H1 (cell line): ENCODE measurements at regions of chr6 and their contacts with region 1.

Region 1: GRCh38 chr6:27332692-27333641 is 20.9 kb upstream of the POM121L2 start:
- DNase-seq: peak; percentile 13 to 76
- H3K4me3 ChIP-seq: peak overlapping the region; percentile 84 to 98 (median 92)
- H3K27ac ChIP-seq: no peak overlapping the region; the same call in 1 of the 2 replicates
- H3K4me1 ChIP-seq: no peaks in the 10 kb centered on the region
- H3K27me3 ChIP-seq: no peaks in the 10 kb centered on the region
- CTCF ChIP-seq: no peak; a peak in 1 of 4 replicates
- EP300 ChIP-seq: no peak
- POLR2A ChIP-seq: no peak
- RAD21 ChIP-seq: no peak

Region 2: DNA sequence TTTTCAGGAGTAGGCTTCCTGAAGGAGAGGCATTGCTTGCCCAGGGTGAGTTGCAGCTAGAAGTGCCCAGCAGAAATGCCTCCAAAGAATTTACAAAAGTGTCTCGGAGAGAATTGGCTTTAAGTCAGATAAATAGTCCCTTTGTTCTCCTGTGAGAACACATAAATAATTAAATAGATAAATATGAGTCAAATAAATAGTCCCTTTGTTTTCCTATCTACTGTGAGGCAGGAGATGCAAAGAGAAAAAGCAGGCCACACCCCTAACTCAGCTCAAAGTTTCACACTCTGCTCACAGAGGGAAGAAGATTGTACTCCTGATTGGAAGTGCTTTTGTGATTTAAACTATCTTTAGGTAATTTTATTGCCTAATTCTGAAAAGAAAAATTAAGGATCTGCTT is 266.2 kb before region 1 on chr6:
- CTCF ChIA-PET with region 1: no interaction called
- POLR2A ChIA-PET with region 1: no interaction called
- DNase-seq: no peak
- H3K4me3 ChIP-seq: peak overlapping the region in 2 of 4 experiments; percentile 2 to 7; a peak in 2 of 8 replicates
- H3K27ac ChIP-seq: no peak overlapping the region
- H3K4me1 ChIP-seq: peaks cover 4 to 5% (median 4%) of the 10 kb centered on the region in 4 experiments; a peak in 6 of 7 replicates
- H3K27me3 ChIP-seq: no peaks in the 10 kb centered on the region
- CTCF ChIP-seq: no peak
- EP300 ChIP-seq: no peak
- POLR2A ChIP-seq: no peak
- RAD21 ChIP-seq: no peak

Region 3: DNA sequence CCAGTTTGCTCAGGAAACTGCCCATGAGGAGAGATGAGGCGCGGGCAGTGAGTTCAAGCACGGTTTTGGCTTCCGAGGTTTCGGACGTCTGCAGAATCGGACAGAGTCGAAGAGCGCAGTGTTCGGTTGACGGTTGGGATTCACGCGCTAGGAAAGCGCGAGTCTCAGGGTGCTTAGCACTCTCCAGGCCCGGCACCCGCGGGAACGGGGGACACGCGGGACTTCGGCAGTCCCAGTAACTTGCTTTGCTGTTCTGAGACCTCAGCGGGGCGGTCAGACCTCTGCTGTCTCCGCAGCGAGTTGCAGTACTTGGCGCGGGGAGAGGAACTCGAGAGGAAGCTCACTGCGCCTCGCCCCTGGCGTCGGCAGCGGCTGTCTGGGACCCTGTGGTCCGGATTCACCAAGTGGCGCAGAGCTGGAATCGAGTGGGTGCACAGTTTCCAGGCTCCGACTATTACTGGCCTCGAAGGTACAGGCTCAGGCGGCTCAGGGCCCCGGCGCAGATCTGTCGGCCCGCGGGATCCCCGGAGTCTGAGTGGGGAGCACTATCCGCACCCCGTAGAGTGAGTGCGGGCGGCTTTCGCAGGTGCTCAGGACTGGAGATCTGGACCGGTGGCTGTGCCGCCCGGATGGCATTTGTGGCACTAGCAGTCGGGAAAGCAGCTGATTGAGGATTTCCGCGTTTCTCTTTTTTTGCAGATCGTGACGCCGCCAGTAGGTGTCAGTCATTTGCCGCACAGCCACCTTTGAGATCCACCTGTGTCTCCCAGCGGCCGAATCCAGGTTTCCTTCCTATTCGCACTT is 20.6 kb before region 1 on chr6 and contains the start of gene POM121L2:
- CTCF ChIA-PET with region 1: interaction called, 13 read pairs
- POLR2A ChIA-PET with region 1: interaction called, 4 read pairs
- DNase-seq: peak in 1 of 2 experiments; percentile 90
- H3K4me3 ChIP-seq: peak within 1 kb of the TSS; percentile 61 to 80 (median 72)
- H3K27ac ChIP-seq: no peak within 1 kb of the TSS
- H3K4me1 ChIP-seq: peaks cover 0 to 6% (median 2%) of the 10 kb centered on the region in 4 experiments; a peak in 3 of 7 replicates
- H3K27me3 ChIP-seq: peaks cover 13 to 36% (median 31%) of the 10 kb centered on the region in 4 experiments
- CTCF ChIP-seq: peak; percentile 78 to 91 (median 89)
- EP300 ChIP-seq: no peak
- POLR2A ChIP-seq: no peak
- RAD21 ChIP-seq: peak; percentile 91 to 94
- total RNA-seq, gene POM121L2: 0.09 and 0.17 TPM in 2 replicates

Region 4: DNA sequence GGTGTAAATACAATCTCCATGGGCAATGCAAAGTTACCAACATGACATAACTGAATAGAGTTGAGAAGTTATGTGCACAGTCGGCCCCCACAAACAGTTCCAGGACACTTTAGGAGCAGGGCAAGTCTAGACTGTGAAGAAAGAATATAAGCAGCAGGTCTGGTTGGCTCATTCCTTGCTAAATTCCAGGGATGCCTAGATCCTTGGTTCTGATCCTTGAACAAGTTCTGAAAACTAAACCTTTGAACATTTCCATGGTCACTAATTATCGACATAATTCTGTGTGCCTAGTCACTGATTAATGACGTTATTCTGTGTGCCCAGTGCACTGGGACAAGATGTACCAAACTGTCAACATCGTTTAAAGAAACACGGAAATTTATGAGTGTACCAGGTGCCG is 127.7 kb after region 1 on chr6:
- CTCF ChIA-PET with region 1: no interaction called
- POLR2A ChIA-PET with region 1: no interaction called
- DNase-seq: no peak
- H3K4me3 ChIP-seq: no peak overlapping the region
- H3K27ac ChIP-seq: no peak overlapping the region
- H3K4me1 ChIP-seq: no peaks in the 10 kb centered on the region
- H3K27me3 ChIP-seq: no peaks in the 10 kb centered on the region
- CTCF ChIP-seq: no peak
- EP300 ChIP-seq: no peak
- POLR2A ChIP-seq: no peak
- RAD21 ChIP-seq: no peak